CD4-positive, alpha-beta T cell (primary cell): ENCODE measurements at regions of chr12 and their contacts with region 1.

Region 1: DNA sequence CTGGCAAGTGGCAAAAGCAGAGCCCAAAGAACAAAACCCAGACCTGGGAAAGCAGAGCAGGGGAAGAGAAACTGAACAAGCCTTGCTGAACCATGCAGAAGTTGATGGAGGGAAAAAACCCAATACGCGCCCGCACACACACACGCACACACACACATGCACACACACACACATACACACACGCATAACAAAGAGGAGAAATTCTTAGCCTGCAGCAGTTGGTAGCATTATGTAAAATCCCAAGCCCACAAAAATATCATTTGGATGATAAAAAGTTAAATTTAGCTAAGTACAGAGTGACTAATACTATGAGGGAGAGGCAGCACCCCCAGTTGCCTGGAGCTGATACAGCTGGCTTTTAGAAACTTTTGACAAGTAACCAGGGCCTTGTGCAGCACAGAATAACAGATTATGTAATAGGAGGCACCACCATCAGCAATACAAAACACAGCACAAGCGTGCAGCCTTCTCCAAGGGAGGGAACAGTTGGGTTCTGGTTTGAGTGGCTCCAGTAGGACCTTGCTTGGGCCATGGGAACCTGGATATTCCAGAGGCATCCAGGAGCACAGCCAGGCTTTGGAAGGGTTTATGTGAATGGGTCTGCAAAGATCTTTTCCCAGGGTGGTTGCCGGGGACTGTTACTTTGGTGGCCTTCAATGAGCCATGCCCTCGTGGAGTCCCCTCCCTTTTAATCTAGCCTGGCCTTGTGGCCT is 35.3 kb downstream of the PITPNM2 start:
- DNase-seq: peak in 7 of 14 experiments; percentile 20 to 64 (median 44)
- ATAC-seq: peak; percentile 89
- H3K4me3 ChIP-seq: no peak overlapping the region
- H3K4me3 Mint-ChIP-seq: peak overlapping the region; percentile 66
- H3K27ac ChIP-seq: peak overlapping the region; percentile 30 to 64
- H3K27ac Mint-ChIP-seq: peak overlapping the region; percentile 99
- H3K4me1 ChIP-seq: peaks cover 53% of the 10 kb centered on the region
- H3K4me1 Mint-ChIP-seq: peaks cover 80% of the 10 kb centered on the region
- H3K27me3 ChIP-seq: no peaks in the 10 kb centered on the region
- H3K27me3 Mint-ChIP-seq: no peaks in the 10 kb centered on the region
- CTCF ChIP-seq: no peak

Region 2: DNA sequence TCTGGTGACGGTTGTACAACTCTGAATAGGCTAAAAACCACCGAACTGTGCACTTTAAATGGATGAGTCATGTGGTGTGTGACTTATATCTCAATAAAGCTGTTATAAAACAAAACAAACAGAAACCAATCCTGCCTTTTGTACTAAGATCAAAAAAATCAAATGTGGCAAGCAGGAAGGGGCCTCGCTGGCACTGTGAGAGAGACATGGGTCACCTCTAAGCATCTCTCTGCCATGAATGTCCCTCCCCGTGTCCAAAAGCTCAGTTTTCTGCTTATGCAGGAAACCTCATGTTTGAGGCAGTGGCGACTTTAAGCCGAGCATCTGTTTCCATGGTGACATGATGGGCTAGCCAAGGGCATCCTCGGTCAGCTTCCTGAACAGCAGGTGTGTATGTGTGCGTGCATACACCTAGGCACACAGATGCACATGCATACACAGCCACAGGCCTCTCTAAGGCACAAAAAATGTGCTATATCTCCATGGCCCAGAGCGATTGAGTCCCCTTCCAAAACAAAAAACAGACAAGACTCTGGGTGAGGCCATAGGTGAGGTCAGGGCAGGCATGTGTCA is 90.7 kb before region 1 on chr12:
- CTCF ChIA-PET with region 1: no interaction called
- POLR2A ChIA-PET with region 1: no interaction called
- intact Hi-C with region 1: no loop called
- DNase-seq: peak in 2 of 14 experiments; percentile 9 to 12
- ATAC-seq: peak; percentile 44
- H3K4me3 ChIP-seq: no peak overlapping the region
- H3K4me3 Mint-ChIP-seq: no peak overlapping the region
- H3K27ac ChIP-seq: no peak overlapping the region
- H3K27ac Mint-ChIP-seq: no peak overlapping the region
- H3K4me1 ChIP-seq: peaks cover 8% of the 10 kb centered on the region
- H3K4me1 Mint-ChIP-seq: peaks cover 32% of the 10 kb centered on the region
- H3K27me3 ChIP-seq: no peaks in the 10 kb centered on the region
- H3K27me3 Mint-ChIP-seq: no peaks in the 10 kb centered on the region
- CTCF ChIP-seq: no peak

Region 3: GRCh38 chr12:123131879-123132452 is 16.4 kb after region 1 on chr12:
- CTCF ChIA-PET with region 1: no interaction called
- POLR2A ChIA-PET with region 1: interaction called, 47 read pairs
- intact Hi-C with region 1: no loop called
- DNase-seq: peak in 12 of 14 experiments; percentile 22 to 81 (median 51)
- ATAC-seq: peak; percentile 90
- H3K4me3 ChIP-seq: peak overlapping the region; percentile 25
- H3K4me3 Mint-ChIP-seq: peak overlapping the region; percentile 49
- H3K27ac ChIP-seq: peak overlapping the region; percentile 62 to 63
- H3K27ac Mint-ChIP-seq: peak overlapping the region; percentile 91
- H3K4me1 ChIP-seq: peaks cover 24% of the 10 kb centered on the region
- H3K4me1 Mint-ChIP-seq: peaks cover 58% of the 10 kb centered on the region
- H3K27me3 ChIP-seq: no peaks in the 10 kb centered on the region
- H3K27me3 Mint-ChIP-seq: no peaks in the 10 kb centered on the region
- CTCF ChIP-seq: no peak

Region 4: DNA sequence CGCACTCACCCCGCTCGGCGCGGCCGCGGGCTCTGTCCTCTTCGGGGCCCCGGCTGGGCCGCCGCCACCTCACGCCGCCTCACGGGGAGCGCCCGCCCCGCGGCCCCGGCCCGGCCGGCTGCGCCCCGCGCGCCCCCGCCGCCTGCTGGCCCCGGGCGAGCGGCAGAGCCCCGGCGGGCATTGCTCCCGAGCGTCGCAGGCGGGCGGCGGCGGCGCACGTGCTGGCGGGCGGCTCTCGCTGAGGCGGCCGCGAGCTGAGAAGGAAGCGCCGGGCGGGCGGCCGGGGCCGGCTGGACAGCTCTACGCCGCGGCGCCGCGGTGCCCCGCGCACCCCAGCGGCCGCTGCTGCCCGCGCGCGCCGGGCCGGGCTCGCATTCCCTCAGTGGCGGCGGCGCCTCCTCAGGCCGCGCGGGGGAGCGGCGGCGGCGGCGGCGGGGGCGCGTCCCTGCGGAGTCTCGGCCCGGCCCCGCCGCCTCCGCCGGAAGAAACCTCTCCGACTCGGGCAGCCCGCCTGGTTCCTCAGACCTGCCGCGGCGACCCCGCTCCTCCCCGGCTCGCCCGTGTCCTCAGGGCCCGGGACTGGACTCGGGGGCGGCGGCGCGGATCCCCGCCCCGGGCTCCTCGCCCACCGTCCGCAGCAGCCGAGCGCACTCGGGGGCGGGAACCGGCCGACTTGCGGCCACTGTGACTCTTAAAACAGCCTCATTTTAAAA is 35.3 kb after region 1 on chr12 and contains the start of gene PITPNM2:
- CTCF ChIA-PET with region 1: no interaction called
- POLR2A ChIA-PET with region 1: interaction called, 36 read pairs
- intact Hi-C with region 1: loop called in 1 of 2 experiments (anchors 5 kb)
- DNase-seq: peak; percentile 28 to 87 (median 60)
- ATAC-seq: peak; percentile 86
- H3K4me3 ChIP-seq: peak within 1 kb of the TSS; percentile 76
- H3K4me3 Mint-ChIP-seq: peak within 1 kb of the TSS; percentile 93
- H3K27ac ChIP-seq: peak within 1 kb of the TSS; percentile 22 to 40
- H3K27ac Mint-ChIP-seq: peak within 1 kb of the TSS; percentile 89
- H3K4me1 ChIP-seq: peaks cover 27% of the 10 kb centered on the region
- H3K4me1 Mint-ChIP-seq: peaks cover 52% of the 10 kb centered on the region
- H3K27me3 ChIP-seq: no peaks in the 10 kb centered on the region
- H3K27me3 Mint-ChIP-seq: no peaks in the 10 kb centered on the region
- CTCF ChIP-seq: no peak
- total RNA-seq, gene PITPNM2: 37.3 to 38.3 TPM

Region 5: DNA sequence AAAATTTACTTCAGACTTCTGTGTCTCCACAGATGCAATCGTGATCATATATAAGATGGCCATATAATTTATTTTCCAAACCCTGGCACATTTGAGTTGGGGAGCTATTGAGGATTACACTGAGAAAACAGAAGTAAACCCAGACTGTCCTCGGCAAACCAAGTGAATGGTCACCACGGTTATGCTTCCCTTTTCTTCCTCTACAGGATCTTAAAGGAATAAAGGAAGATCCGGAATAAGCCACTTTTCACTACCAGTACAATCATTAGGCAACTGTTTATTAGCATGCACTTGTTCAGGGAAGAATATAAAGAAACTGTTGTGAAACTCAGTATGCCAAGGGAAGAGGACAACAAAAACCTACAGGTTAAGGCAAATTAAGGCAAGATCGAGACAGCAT is 221.5 kb after region 1 on chr12:
- CTCF ChIA-PET with region 1: no interaction called
- POLR2A ChIA-PET with region 1: no interaction called
- intact Hi-C with region 1: no loop called
- DNase-seq: no peak
- ATAC-seq: no peak
- H3K4me3 ChIP-seq: no peak overlapping the region
- H3K4me3 Mint-ChIP-seq: no peak overlapping the region
- H3K27ac ChIP-seq: no peak overlapping the region
- H3K27ac Mint-ChIP-seq: no peak overlapping the region
- H3K4me1 ChIP-seq: no peaks in the 10 kb centered on the region
- H3K4me1 Mint-ChIP-seq: peaks cover 10% of the 10 kb centered on the region
- H3K27me3 ChIP-seq: no peaks in the 10 kb centered on the region
- H3K27me3 Mint-ChIP-seq: no peaks in the 10 kb centered on the region
- CTCF ChIP-seq: no peak